GM18951 (cell line): ENCODE measurements at regions of chr1 and their contacts with region 1.

Region 1: GRCh38 chr1:67230539-67230938 is 64.3 kb downstream of the IL23R start:
- POLR2A ChIP-seq: no peak

Region 2: GRCh38 chr1:66957938-66958337 is 272.6 kb before region 1 on chr1:
- in situ Hi-C with region 1: no loop called
- POLR2A ChIP-seq: no peak

Region 3: GRCh38 chr1:67347688-67348472 is 117.3 kb after region 1 on chr1:
- in situ Hi-C with region 1: loop called (anchors 10 kb)
- POLR2A ChIP-seq: no peak

Region 4: DNA sequence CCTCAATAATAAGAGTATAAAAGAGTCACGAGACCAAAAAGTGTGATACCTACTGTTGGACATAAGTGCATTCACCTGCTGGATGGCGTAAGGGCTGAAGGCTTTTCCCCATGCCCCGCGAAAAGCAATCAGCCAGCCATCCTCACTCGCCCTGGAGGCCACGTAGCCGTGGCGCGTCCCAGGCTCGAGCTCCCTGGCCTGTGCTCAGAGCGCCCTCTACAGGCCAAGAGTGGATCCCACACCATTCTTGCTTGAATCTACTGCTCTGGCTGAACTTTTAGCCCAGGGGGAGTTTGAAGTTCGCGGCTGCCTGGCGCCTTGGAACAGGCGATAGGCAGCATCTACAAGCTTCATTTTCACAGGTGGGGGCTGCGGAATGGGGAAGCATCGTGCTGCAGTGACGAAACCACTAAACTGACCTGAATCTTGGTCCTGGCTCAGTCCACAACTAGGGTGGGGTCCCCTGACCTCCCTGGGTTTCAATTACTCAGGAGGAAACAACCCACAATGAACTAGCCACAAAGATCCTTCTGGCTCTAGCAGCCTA is 269.9 kb after region 1 on chr1:
- in situ Hi-C with region 1: loop called (anchors 10 kb)
- POLR2A ChIP-seq: no peak